ENCODE measurements at regions of chr10 and their contacts with region 1.

Region 1: GRCh38 chr10:77531441-77532001 is 106.1 kb downstream of the KCNMA1 start:
- DNase-seq: peak; percentile 99
- ATAC-seq: peak; percentile 95
- H3K4me3 ChIP-seq: peak overlapping the region; percentile 36; the same call in 1 of the 2 replicates
- H3K27ac ChIP-seq: peak overlapping the region; percentile 77
- H3K4me1 ChIP-seq: peaks cover 61% of the 10 kb centered on the region
- H3K27me3 ChIP-seq: no peaks in the 10 kb centered on the region
- CTCF ChIP-seq: no peak

Region 2: GRCh38 chr10:77383861-77384553 is 147.5 kb before region 1 on chr10:
- CTCF ChIA-PET with region 1: no interaction called
- POLR2A ChIA-PET with region 1: interaction called, 13 read pairs
- intact Hi-C with region 1: no loop called
- DNase-seq: no peak
- ATAC-seq: no peak
- H3K4me3 ChIP-seq: no peak overlapping the region
- H3K27ac ChIP-seq: no peak overlapping the region
- H3K4me1 ChIP-seq: peaks cover 32% of the 10 kb centered on the region
- H3K27me3 ChIP-seq: no peaks in the 10 kb centered on the region
- CTCF ChIP-seq: no peak

Region 3: GRCh38 chr10:77504873-77505257 is 26.7 kb before region 1 on chr10:
- CTCF ChIA-PET with region 1: interaction called, 3 read pairs
- POLR2A ChIA-PET with region 1: interaction called, 5 read pairs
- intact Hi-C with region 1: loop called (anchors 2 kb)
- DNase-seq: peak; percentile 100
- ATAC-seq: peak; percentile 48
- H3K4me3 ChIP-seq: peak overlapping the region; percentile 15; the same call in 1 of the 2 replicates
- H3K27ac ChIP-seq: peak overlapping the region; percentile 82
- H3K4me1 ChIP-seq: peaks cover 80% of the 10 kb centered on the region
- H3K27me3 ChIP-seq: no peaks in the 10 kb centered on the region
- CTCF ChIP-seq: peak; percentile 90

Region 4: GRCh38 chr10:77513781-77514331 is 17.7 kb before region 1 on chr10:
- CTCF ChIA-PET with region 1: no interaction called
- POLR2A ChIA-PET with region 1: interaction called, 5 read pairs
- intact Hi-C with region 1: loop called (anchors 2 kb)
- DNase-seq: peak; percentile 100
- ATAC-seq: peak; percentile 91
- H3K4me3 ChIP-seq: peak overlapping the region; percentile 49
- H3K27ac ChIP-seq: peak overlapping the region; percentile 82
- H3K4me1 ChIP-seq: peaks cover 69% of the 10 kb centered on the region
- H3K27me3 ChIP-seq: no peaks in the 10 kb centered on the region
- CTCF ChIP-seq: no peak

Region 5: GRCh38 chr10:77726732-77727131 is 195.2 kb after region 1 on chr10:
- CTCF ChIA-PET with region 1: no interaction called
- POLR2A ChIA-PET with region 1: no interaction called
- intact Hi-C with region 1: no loop called
- DNase-seq: no peak
- ATAC-seq: no peak; the same call in 1 of the 2 replicates
- H3K4me3 ChIP-seq: no peak overlapping the region
- H3K27ac ChIP-seq: no peak overlapping the region
- H3K4me1 ChIP-seq: no peaks in the 10 kb centered on the region
- H3K27me3 ChIP-seq: no peaks in the 10 kb centered on the region
- CTCF ChIP-seq: no peak

Measured in PC-3 (cell line).